CD14-positive monocyte (primary cell): ENCODE measurements at regions of chr6 and their contacts with region 1.

Region 1: DNA sequence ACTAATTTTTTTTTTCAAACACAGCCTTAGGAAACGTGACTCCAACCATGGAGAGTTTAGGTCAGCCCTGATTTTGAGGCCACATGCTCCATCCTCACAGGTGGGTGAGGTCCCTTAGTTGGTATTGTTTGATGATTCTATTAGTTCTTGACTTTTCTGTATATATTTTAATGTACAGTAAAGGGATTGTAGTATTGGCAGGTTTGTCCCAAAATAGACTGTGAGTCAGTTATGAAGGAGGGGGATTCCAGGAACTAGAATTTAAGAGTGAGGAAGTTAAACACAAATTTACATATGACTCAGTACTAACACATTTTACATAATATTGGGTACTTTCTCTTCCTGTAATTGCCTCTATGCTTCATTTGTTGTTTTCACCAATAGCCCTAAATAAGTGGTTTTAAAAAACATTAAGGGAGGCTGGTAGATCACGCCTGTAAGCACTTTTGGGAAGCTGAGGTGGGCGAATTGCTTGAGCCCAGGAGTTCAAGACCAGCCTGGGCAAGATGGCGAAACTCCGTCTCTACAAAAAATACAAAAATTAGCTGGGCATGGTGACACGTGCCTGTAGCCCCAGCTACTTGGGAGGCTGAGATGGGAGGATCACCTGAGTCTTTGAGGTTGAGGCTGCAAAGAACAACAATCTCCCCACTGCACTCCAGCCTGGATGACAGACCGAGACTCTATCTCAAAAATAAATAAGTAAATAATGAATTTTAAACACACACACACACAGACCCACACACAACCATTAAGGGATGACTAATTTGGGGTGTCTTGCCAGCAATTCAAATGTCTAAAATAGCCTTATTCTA is 81.8 kb downstream of the SGK1 start:
- DNase-seq: peak; percentile 81 to 94 (median 93)
- H3K4me3 ChIP-seq: no peak overlapping the region
- H3K4me3 Mint-ChIP-seq: no peak overlapping the region
- H3K27ac ChIP-seq: peak overlapping the region; percentile 90 to 96
- H3K27ac Mint-ChIP-seq: peak overlapping the region; percentile 96 to 99 (median 98)
- H3K4me1 ChIP-seq: peaks cover 56 to 83% of the 10 kb centered on the region in 2 donors
- H3K4me1 Mint-ChIP-seq: peaks cover 58% of the 10 kb centered on the region
- H3K27me3 ChIP-seq: no peaks in the 10 kb centered on the region
- H3K27me3 Mint-ChIP-seq: peaks cover 0 to 1% (median 0%) of the 10 kb centered on the region in 3 donors
- CTCF ChIP-seq: no peak

Region 2: DNA sequence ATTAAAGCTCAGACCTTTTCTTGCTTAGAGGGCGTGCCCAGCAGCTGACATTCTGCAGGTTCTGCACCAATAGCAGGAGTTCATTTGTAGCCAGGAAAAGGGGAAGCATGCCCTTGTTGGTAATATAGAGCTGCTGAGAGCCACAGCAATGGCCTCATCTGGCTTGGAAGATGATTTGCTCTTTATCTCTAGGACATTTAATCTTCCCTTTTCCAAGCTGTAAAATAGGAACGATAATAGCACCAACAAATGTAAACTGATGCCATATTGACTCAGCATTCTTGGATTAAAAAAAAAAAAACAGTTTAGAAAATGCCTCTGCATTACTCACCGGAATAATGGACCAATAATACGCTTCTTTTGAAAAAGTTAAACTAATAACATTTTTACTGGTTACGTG is 90.4 kb before region 1 on chr6:
- intact Hi-C with region 1: no loop called
- DNase-seq: peak in 2 of 3 donors; percentile 18 to 32
- H3K4me3 ChIP-seq: no peak overlapping the region
- H3K4me3 Mint-ChIP-seq: no peak overlapping the region
- H3K27ac ChIP-seq: no peak overlapping the region
- H3K27ac Mint-ChIP-seq: no peak overlapping the region
- H3K4me1 ChIP-seq: no peaks in the 10 kb centered on the region
- H3K4me1 Mint-ChIP-seq: peaks cover 2% of the 10 kb centered on the region
- H3K27me3 ChIP-seq: no peaks in the 10 kb centered on the region
- H3K27me3 Mint-ChIP-seq: peaks cover 0 to 5% (median 4%) of the 10 kb centered on the region in 3 donors
- CTCF ChIP-seq: no peak

Region 3: DNA sequence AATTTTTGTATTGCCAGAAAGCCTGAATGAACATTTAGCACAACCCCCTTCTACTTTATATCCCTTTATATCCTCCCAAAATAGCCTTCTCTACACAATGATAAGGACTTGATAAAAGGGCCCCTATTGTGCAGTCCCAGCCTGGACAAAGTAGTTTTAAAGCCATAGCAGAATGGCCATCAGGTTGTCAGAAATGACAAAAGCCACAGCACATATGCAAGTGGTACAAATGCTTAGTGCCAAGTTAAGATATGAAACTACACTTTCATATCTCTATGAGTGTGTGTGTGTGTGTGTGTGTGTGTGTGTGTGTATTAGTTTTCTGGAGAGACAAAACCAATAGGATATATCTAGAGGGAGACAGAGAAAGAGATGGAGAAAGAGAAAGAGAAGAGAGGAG is 50.9 kb before region 1 on chr6:
- intact Hi-C with region 1: no loop called
- DNase-seq: no peak
- H3K4me3 ChIP-seq: no peak overlapping the region
- H3K4me3 Mint-ChIP-seq: no peak overlapping the region
- H3K27ac ChIP-seq: peak overlapping the region in 1 of 2 donors; percentile 51
- H3K27ac Mint-ChIP-seq: peak overlapping the region in 3 of 7 donors; percentile 26 to 75 (median 55)
- H3K4me1 ChIP-seq: peaks cover 15 to 21% of the 10 kb centered on the region in 2 donors
- H3K4me1 Mint-ChIP-seq: peaks cover 34% of the 10 kb centered on the region
- H3K27me3 ChIP-seq: no peaks in the 10 kb centered on the region
- H3K27me3 Mint-ChIP-seq: peaks cover 0 to 2% (median 0%) of the 10 kb centered on the region in 3 donors
- CTCF ChIP-seq: no peak

Region 4: DNA sequence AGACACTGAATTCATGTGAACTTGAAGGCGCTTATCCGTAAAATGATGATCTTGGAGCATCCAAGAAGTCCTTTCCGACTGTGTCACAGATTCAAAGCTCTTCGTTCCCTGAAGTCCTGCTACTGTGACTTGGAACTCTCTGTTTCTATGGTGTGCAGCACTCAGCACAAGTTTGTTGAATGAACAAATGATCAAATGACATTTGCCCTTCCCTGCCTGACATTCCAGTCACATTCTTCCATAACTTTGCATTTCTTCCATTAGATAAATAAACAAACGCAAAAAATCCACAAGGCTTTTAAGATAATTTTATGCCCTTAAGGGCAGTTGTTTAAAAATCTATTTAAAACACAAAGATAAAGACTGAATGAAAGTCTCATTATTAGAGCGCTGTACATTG is 41.9 kb after region 1 on chr6:
- intact Hi-C with region 1: loop called in 1 of 2 experiments (anchors 5 kb)
- DNase-seq: no peak
- H3K4me3 ChIP-seq: no peak overlapping the region
- H3K4me3 Mint-ChIP-seq: no peak overlapping the region
- H3K27ac ChIP-seq: peak overlapping the region in 1 of 2 donors; percentile 87
- H3K27ac Mint-ChIP-seq: peak overlapping the region in 4 of 7 donors; percentile 62 to 99 (median 94)
- H3K4me1 ChIP-seq: peaks cover 28 to 32% of the 10 kb centered on the region in 2 donors
- H3K4me1 Mint-ChIP-seq: peaks cover 34% of the 10 kb centered on the region
- H3K27me3 ChIP-seq: no peaks in the 10 kb centered on the region
- H3K27me3 Mint-ChIP-seq: peaks cover 0 to 2% (median under 1%) of the 10 kb centered on the region in 3 donors
- CTCF ChIP-seq: no peak

Region 5: DNA sequence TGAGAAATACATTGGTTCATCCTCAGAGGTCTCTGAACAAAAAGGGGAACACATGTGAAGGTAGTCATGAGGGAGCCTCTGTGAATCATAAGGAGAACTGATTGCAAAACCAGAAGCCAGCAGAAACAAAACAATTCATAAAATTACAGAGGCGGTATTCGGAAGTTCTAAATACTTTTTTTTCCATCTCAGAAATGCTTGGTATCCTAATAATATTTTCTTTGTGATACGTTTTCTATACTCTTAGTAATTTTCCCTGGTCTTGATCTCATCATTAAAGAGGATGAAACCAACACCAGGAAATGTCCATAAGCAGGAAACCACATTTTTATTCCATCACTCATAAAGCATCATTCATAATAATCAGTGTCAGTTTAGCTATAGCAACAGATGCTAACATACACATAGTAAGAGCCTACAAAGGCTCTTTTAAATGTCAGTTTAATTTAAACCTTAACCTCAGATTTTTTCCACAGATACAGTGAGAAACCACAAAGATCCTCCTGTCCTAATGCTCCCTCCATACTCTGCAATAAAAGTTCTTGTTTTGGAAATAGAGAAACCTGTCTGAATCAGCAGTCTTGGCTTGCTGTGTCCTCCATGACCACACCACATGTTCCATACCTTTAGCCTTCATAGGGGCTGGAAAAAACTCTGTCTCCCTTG is 52.5 kb after region 1 on chr6:
- intact Hi-C with region 1: loop called in 1 of 2 experiments (anchors 5 kb)
- DNase-seq: peak; percentile 91 to 96 (median 95)
- H3K4me3 ChIP-seq: peak overlapping the region in 1 of 3 experiments; percentile 11
- H3K4me3 Mint-ChIP-seq: peak overlapping the region in 1 of 2 donors; percentile 51
- H3K27ac ChIP-seq: peak overlapping the region; percentile 67 to 95
- H3K27ac Mint-ChIP-seq: peak overlapping the region; percentile 95 to 99 (median 97)
- H3K4me1 ChIP-seq: peaks cover 20 to 23% of the 10 kb centered on the region in 2 donors
- H3K4me1 Mint-ChIP-seq: peaks cover 24% of the 10 kb centered on the region
- H3K27me3 ChIP-seq: no peaks in the 10 kb centered on the region
- H3K27me3 Mint-ChIP-seq: no peaks in the 10 kb centered on the region
- CTCF ChIP-seq: no peak

Region 6: DNA sequence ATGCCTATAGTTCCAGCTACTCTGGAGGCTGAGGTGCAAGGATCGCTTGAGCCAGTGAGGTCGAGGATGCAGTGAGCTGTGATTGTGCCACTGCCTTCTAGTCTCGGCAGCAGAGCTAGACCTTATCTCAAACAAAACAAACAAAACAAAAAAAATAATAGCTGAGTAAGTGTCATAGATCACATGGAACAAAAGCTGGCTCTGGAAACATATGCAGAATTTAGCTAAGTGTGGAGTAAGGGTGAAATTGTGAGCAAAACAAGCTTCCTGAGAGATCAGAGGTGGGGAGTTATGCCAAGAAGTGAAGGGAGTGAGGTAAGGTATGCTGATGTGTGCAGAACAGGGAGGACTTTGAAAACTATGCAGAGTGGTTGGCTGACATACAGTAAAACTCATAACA is 63.1 kb after region 1 on chr6:
- intact Hi-C with region 1: no loop called
- DNase-seq: no peak
- H3K4me3 ChIP-seq: no peak overlapping the region
- H3K4me3 Mint-ChIP-seq: no peak overlapping the region
- H3K27ac ChIP-seq: no peak overlapping the region
- H3K27ac Mint-ChIP-seq: no peak overlapping the region
- H3K4me1 ChIP-seq: peaks cover 27 to 29% of the 10 kb centered on the region in 2 donors
- H3K4me1 Mint-ChIP-seq: peaks cover 29% of the 10 kb centered on the region
- H3K27me3 ChIP-seq: no peaks in the 10 kb centered on the region
- H3K27me3 Mint-ChIP-seq: peaks cover 0 to 2% (median 1%) of the 10 kb centered on the region in 3 donors
- CTCF ChIP-seq: no peak

Region 7: GRCh38 chr6:134422426-134423231 is 186.5 kb after region 1 on chr6:
- intact Hi-C with region 1: loop called in 1 of 2 experiments (anchors 10 kb)
- DNase-seq: peak; percentile 68 to 80 (median 72)
- H3K4me3 ChIP-seq: no peak overlapping the region
- H3K4me3 Mint-ChIP-seq: no peak overlapping the region
- H3K27ac ChIP-seq: peak overlapping the region in 1 of 2 donors; percentile 62
- H3K27ac Mint-ChIP-seq: peak overlapping the region; percentile 63 to 93 (median 80)
- H3K4me1 ChIP-seq: peaks cover 27 to 43% of the 10 kb centered on the region in 2 donors
- H3K4me1 Mint-ChIP-seq: peaks cover 39% of the 10 kb centered on the region
- H3K27me3 ChIP-seq: no peaks in the 10 kb centered on the region
- H3K27me3 Mint-ChIP-seq: peaks cover 1 to 5% (median 2%) of the 10 kb centered on the region in 3 donors
- CTCF ChIP-seq: no peak

Region 8: GRCh38 chr6:134640975-134641429 is 404.9 kb after region 1 on chr6:
- intact Hi-C with region 1: loop called in 1 of 2 experiments (anchors 5 kb)
- DNase-seq: peak; percentile 97 to 99 (median 97)
- H3K4me3 ChIP-seq: no peak overlapping the region
- H3K4me3 Mint-ChIP-seq: no peak overlapping the region
- H3K27ac ChIP-seq: peak overlapping the region; percentile 58 to 76
- H3K27ac Mint-ChIP-seq: peak overlapping the region; percentile 84 to 98 (median 92)
- H3K4me1 ChIP-seq: peaks cover 12 to 14% of the 10 kb centered on the region in 2 donors
- H3K4me1 Mint-ChIP-seq: peaks cover 15% of the 10 kb centered on the region
- H3K27me3 ChIP-seq: no peaks in the 10 kb centered on the region
- H3K27me3 Mint-ChIP-seq: peaks cover 0 to 2% (median 2%) of the 10 kb centered on the region in 3 donors
- CTCF ChIP-seq: peak; percentile 93